ENCODE measurements at regions of chr19 and their contacts with region 1.

Region 1: GRCh38 chr19:50329146-50329925 is at the start of gene KCNC3:
- DNase-seq: peak; percentile 99
- ATAC-seq: peak; percentile 67
- H3K4me3 Mint-ChIP-seq: peak within 1 kb of the TSS; percentile 75
- H3K27ac Mint-ChIP-seq: peak within 1 kb of the TSS; percentile 86
- H3K4me1 Mint-ChIP-seq: peaks cover 59% of the 10 kb centered on the region
- H3K27me3 Mint-ChIP-seq: peaks cover 33% of the 10 kb centered on the region
- total RNA-seq, gene KCNC3: 9.1 to 9.7 TPM

Region 2: GRCh38 chr19:50252111-50252886 is 77.0 kb before region 1 on chr19:
- CTCF ChIA-PET with region 1: interaction called, 5 read pairs
- POLR2A ChIA-PET with region 1: no interaction called
- intact Hi-C with region 1: loop called (anchors 1 to 5 kb)
- DNase-seq: peak; percentile 71
- ATAC-seq: no peak
- H3K4me3 Mint-ChIP-seq: no peak overlapping the region
- H3K27ac Mint-ChIP-seq: no peak overlapping the region
- H3K4me1 Mint-ChIP-seq: no peaks in the 10 kb centered on the region
- H3K27me3 Mint-ChIP-seq: peaks cover 14% of the 10 kb centered on the region

Region 3: GRCh38 chr19:50362656-50363424 is 33.5 kb after region 1 on chr19:
- CTCF ChIA-PET with region 1: interaction called, 6 read pairs
- POLR2A ChIA-PET with region 1: no interaction called
- intact Hi-C with region 1: loop called in 1 of 2 experiments (anchors 1 kb)
- DNase-seq: peak; percentile 76
- ATAC-seq: peak; percentile 50
- H3K4me3 Mint-ChIP-seq: peak overlapping the region; percentile 58
- H3K27ac Mint-ChIP-seq: peak overlapping the region; percentile 99
- H3K4me1 Mint-ChIP-seq: peaks cover 81% of the 10 kb centered on the region
- H3K27me3 Mint-ChIP-seq: no peaks in the 10 kb centered on the region

Region 4: GRCh38 chr19:50383852-50384684 is 54.7 kb after region 1 on chr19 and contains the start of gene POLD1:
- CTCF ChIA-PET with region 1: no interaction called
- POLR2A ChIA-PET with region 1: interaction called, 4 read pairs
- intact Hi-C with region 1: loop called in 1 of 2 experiments (anchors 1 kb)
- DNase-seq: peak; percentile 100
- ATAC-seq: peak; percentile 92
- H3K4me3 Mint-ChIP-seq: peak within 1 kb of the TSS; percentile 99
- H3K27ac Mint-ChIP-seq: peak within 1 kb of the TSS; percentile 93
- H3K4me1 Mint-ChIP-seq: peaks cover 27% of the 10 kb centered on the region
- H3K27me3 Mint-ChIP-seq: no peaks in the 10 kb centered on the region
- total RNA-seq, gene POLD1: 220 to 227 TPM

Region 5: GRCh38 chr19:50657712-50658440 is 328.5 kb after region 1 on chr19:
- CTCF ChIA-PET with region 1: no interaction called
- POLR2A ChIA-PET with region 1: no interaction called
- intact Hi-C with region 1: loop called in 1 of 2 experiments (anchors 2 kb)
- DNase-seq: peak; percentile 98
- ATAC-seq: peak; percentile 96
- H3K4me3 Mint-ChIP-seq: peak overlapping the region; percentile 76
- H3K27ac Mint-ChIP-seq: peak overlapping the region; percentile 93
- H3K4me1 Mint-ChIP-seq: peaks cover 20% of the 10 kb centered on the region
- H3K27me3 Mint-ChIP-seq: peaks cover 65% of the 10 kb centered on the region

Measured in activated CD4-positive, alpha-beta T cell treated with anti-CD3 and anti-CD28 coated beads for 36 hours (primary cell).